Left colon (tissue), 2 donors: ENCODE measurements at regions of chr10 and their contacts with region 1.

Region 1: DNA sequence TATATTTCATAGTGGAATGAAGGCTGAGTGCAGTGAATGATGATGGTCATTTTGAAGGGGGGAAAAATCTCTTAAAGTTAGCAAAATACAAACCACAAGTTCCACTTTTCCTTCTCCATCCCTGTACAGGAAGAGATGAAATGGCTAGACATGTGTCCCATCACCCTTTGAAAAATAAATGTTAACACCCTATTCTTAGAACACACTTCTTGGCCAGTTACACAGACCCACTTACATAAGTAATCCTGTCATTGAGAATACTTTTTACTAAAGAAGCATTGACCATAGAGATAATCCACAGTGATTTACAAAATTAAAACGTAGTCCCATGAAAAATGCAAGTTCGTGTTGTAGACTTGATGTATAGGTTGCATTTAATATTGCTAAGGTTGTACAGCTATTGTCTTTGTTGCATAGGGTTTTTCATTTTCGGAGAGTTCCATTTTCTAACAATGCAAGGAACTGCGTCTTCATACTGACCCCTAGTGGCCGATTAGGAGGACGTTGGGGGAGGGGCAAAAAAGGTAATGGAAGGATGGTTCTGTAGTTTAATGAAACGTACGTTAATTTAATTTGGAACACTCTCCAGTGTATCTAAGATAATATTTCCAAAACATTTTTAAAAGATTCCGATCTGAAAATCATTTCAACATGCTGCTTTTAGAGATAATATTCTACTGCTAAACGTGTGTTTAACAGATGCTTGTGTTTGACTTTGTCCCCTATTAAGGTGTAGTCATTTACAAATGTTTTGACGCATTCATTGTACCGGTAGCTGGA is 60.9 kb downstream of the ARMC3 start:
- DNase-seq: peak in 1 of 2 donors; percentile 53
- ATAC-seq: peak; percentile 66

Region 2: DNA sequence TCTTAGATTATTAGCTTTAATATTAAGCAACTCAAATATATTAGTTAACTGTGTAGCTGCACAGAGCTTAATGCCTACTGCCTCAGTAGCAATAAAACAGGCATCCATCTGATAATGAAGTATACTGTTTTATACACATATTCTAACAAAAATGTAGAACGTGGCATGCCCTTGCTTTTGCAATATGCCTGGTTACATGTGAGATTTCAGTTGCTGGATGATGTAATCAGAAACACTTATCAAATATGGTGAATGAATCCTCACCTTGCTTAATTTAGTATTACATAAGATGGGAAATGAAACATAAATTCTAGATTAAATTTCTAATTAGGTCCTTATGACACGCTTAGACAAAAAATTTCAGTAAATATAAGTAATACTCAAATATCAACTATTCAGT is 993.2 kb before region 1 on chr10:
- intact Hi-C with region 1: loop called in 1 of 2 experiments (anchors 5 kb)
- DNase-seq: no peak
- ATAC-seq: no peak

Region 3: DNA sequence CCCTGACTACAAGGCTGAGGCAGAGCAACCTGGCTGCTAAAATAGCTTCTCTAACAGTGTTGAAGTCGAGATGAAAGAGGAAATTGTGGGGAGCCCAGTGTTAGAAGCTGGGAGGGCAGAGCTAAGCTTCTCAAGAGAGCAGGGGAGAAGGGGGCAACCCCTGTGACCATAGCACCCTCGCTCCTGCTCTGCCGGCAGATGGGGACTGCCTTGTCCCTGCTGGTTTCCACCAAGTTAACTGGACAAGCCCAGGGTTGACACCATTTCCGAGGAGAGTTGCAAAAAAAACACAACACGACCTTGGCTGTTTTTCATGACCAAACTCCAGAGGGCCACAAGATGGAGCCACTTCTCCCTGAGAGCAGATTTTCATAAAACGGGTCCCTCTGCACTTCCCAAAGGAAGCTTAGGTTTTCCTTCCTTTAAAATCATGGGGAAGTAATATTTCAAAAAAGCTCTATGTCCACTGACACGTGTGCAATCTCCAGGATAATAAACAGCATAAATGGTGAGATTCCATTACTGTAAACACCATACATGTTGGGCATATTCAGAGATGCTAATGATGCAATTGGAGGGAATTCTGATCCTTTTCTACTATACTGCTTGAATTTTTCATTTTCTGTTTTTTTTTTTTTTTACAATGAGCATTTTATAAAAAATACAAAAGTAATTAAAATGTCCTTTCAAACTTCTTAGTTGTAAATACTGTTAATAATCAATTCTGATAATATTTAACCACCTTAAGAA is 414.8 kb before region 1 on chr10:
- intact Hi-C with region 1: loop called in 1 of 2 experiments (anchors 10 kb)
- DNase-seq: no peak
- ATAC-seq: no peak